Heart right ventricle (tissue), 16 donors: ENCODE measurements at regions of chr12 and their contacts with region 1.

Region 1: DNA sequence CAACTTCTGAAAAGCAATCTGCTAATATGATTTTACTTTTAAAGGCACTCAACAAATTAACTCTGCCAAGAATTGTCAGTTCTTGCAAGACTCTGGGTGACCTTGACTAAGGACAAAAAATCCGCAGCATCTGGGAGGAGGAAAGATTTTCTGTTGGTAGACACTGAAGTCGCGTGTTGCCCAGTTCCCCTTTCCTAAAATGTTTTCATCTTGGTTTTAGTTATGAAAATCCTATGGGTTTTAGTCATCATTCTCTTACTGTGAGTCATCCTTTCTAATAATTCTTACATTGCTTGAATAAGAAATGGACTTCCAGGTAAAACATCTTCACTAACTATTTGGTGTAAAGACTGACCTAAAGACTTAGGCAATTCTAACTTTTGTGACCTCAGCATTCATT is 9.1 kb downstream of the GSG1 start:
- DNase-seq: no peak
- ATAC-seq: no peak
- H3K4me3 ChIP-seq: no peak overlapping the region
- H3K27ac ChIP-seq: no peak overlapping the region
- H3K4me1 ChIP-seq: peaks cover 2 to 42% (median 23%) of the 10 kb centered on the region in 9 donors
- H3K27me3 ChIP-seq: no peaks in the 10 kb centered on the region
- CTCF ChIP-seq: no peak

Region 2: GRCh38 chr12:12916135-12916944 is 178.0 kb before region 1 on chr12:
- intact Hi-C with region 1: loop called in 4 of 10 experiments (anchors 1 to 10 kb)
- DNase-seq: peak; percentile 85 to 87
- ATAC-seq: peak; percentile 87 to 97 (median 95)
- H3K4me3 ChIP-seq: peak overlapping the region in 5 of 10 donors; percentile 16 to 32 (median 19)
- H3K27ac ChIP-seq: peak overlapping the region in 8 of 10 donors; percentile 12 to 51 (median 35)
- H3K4me1 ChIP-seq: peaks cover 0 to 19% (median 8%) of the 10 kb centered on the region in 9 donors
- H3K27me3 ChIP-seq: peaks cover 0 to 3% (median 0%) of the 10 kb centered on the region in 7 donors
- CTCF ChIP-seq: peak; percentile 94 to 99 (median 98)

Region 3: GRCh38 chr12:12975322-12976077 is 118.8 kb before region 1 on chr12:
- intact Hi-C with region 1: no loop called
- DNase-seq: no peak
- ATAC-seq: peak in 4 of 8 donors; percentile 21 to 54 (median 36)
- H3K4me3 ChIP-seq: no peak overlapping the region
- H3K27ac ChIP-seq: peak overlapping the region in 4 of 10 donors; percentile 6 to 73 (median 28)
- H3K4me1 ChIP-seq: peaks cover 0 to 29% (median 3%) of the 10 kb centered on the region in 9 donors
- H3K27me3 ChIP-seq: no peaks in the 10 kb centered on the region
- CTCF ChIP-seq: peak in 6 of 9 donors; percentile 10 to 50 (median 30)

Region 4: DNA sequence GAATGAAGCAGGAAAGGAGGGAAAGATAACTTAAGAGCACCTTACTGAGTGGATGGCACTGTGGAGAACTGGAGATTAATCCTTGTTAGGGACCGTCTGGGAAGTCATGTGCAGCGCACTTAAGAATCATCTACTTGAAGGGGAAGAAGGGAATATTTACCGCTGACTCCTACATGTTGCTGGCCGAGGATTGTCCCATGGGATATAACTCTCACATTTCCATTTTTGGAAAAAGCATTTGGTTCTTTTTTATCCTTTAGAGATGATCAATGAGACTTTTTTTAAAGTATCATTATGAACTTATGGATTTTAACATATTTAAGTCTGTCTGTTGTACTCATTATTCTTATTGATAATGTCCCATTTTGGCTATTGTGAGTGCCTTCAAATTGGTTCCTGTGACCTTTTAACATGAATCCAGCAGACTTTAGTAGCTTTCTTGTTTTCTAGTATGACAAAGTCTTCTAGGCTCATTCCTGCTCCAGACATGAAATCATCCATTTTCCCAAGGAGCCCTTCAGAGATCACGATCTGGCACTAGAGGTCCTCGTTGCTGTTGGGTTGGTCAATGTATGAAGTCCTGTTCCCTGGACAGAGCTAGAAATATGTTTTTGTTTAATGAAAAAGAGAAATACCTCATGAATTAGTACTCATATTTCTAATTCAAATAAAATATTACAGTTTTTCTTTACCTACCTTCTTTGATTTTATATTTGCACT is 70.4 kb before region 1 on chr12:
- intact Hi-C with region 1: loop called in 2 of 10 experiments (anchors 5 to 10 kb)
- DNase-seq: peak in 1 of 2 donors; percentile 15
- ATAC-seq: peak in 4 of 8 donors; percentile 67 to 84 (median 72)
- H3K4me3 ChIP-seq: no peak overlapping the region
- H3K27ac ChIP-seq: no peak overlapping the region
- H3K4me1 ChIP-seq: peaks cover 0 to 13% (median 0%) of the 10 kb centered on the region in 9 donors
- H3K27me3 ChIP-seq: peaks cover 0 to 3% (median 0%) of the 10 kb centered on the region in 7 donors
- CTCF ChIP-seq: peak in 6 of 9 donors; percentile 18 to 67 (median 44)

Region 5: DNA sequence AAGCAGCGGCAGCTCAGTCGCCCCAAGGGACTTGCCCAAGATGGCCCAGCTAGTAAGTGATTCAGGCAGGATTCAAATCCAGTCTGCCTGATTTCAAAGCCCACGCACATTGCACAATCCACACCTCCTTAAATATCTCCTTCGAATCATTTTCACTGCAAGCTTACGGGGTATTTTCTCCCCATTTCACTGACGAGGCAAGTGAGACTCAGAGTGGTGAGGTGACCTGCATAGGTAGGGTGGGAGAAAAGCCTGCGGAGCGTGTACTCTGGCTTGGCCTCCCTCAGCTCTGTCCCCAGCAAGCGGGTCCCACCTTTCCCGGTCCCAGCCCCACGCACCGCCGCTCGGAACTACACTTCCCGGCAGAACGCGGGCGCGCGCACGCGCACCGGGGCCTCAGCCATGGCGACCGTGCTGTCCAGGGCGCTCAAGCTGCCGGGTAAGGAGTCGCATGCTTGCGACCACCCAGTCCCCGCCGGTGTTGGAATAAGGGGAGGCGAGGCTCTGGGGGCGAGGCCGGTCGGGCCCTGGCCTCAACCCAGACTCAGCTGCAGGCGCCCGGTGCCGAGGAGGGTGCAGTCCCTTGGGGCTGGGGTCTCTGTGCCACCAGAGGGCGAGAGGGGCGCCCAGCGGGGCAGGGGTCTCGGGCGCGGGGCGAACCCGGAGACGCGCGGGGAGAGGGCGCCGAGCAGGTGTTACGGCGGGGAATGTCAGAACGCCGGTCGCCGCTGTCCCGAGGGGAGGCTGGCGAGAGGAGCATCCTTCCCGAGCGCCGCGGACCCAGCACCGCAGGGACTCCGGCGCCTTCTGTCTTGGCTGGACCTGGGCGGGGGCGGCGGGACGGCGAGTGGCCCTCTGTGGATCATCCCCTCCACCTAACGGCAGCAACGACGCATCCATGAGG is 50.1 kb before region 1 on chr12 and contains the start of gene FAM234B:
- intact Hi-C with region 1: loop called in 1 of 10 experiments (anchors 10 kb)
- DNase-seq: peak; percentile 78 to 88
- ATAC-seq: peak; percentile 95 to 99 (median 98)
- H3K4me3 ChIP-seq: peak within 1 kb of the TSS; percentile 89 to 100 (median 94)
- H3K27ac ChIP-seq: peak within 1 kb of the TSS in 9 of 10 donors; percentile 50 to 85 (median 68)
- H3K4me1 ChIP-seq: peaks cover 0 to 17% (median 11%) of the 10 kb centered on the region in 9 donors
- H3K27me3 ChIP-seq: peaks cover 0 to 7% (median 0%) of the 10 kb centered on the region in 7 donors
- CTCF ChIP-seq: peak in 6 of 9 donors; percentile 11 to 44 (median 29)
- total RNA-seq, gene FAM234B: 1.4 to 3.6 (median 2.5) TPM

Region 6: DNA sequence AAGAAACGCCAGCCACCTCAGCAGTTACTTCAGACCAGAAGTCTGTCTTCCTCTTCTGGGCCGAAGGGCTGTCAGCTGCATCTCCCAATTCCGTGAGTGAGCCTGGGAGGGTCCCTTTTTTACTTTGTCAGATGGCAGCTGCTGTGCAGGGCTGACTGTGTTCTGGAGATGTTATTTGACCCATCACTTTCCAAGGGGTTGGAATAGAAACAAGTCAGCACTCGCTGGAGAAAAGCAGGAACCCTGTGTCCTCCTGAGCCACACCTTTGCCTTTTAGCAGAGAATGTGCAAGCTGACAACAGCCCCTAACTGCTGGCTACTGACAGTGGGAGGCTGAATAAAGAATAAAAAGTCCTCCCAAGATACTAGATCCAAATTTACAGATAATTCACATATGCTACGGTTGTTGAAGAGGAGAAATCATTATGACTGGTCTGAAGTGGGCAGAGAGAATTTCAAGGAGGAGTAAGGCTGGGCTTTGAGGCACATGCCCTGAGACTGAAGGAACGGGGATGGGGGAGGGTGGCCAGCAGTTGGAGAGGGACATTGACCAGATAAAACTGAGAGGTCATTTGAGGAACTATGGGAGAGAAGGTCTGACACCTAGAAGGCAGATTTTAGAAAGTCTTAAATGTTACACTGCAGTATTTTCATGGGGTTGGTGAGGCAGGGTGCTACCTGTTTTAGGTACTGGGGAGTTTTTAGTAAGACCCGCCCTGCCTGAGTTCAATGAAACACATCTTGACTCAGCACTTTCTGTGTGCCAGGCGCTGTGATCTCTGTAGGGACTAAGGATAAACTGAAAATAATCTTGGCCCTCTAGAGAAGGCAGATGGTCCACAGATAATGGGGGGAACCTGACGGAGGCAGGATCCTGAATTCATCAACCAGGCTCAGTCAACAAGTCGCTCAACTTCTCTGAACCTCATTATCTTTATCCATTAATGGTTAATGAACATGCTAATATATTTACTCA is 22.8 kb before region 1 on chr12:
- intact Hi-C with region 1: no loop called
- DNase-seq: no peak
- ATAC-seq: no peak
- H3K4me3 ChIP-seq: no peak overlapping the region
- H3K27ac ChIP-seq: no peak overlapping the region
- H3K4me1 ChIP-seq: no peaks in the 10 kb centered on the region
- H3K27me3 ChIP-seq: no peaks in the 10 kb centered on the region
- CTCF ChIP-seq: no peak

Region 7: GRCh38 chr12:13196130-13196921 is 102.0 kb after region 1 on chr12 and contains the start of gene EMP1:
- intact Hi-C with region 1: loop called in 4 of 10 experiments (anchors 1 to 2 kb)
- DNase-seq: peak; percentile 79 to 96
- ATAC-seq: peak; percentile 83 to 93 (median 87)
- H3K4me3 ChIP-seq: peak within 1 kb of the TSS; percentile 53 to 71 (median 65)
- H3K27ac ChIP-seq: peak within 1 kb of the TSS; percentile 87 to 97 (median 92)
- H3K4me1 ChIP-seq: peaks cover 7 to 82% (median 41%) of the 10 kb centered on the region in 9 donors
- H3K27me3 ChIP-seq: no peaks in the 10 kb centered on the region
- CTCF ChIP-seq: no peak
- total RNA-seq, gene EMP1: 74.6 to 403 (median 98.5) TPM